CD8-positive, alpha-beta memory T cell (primary cell): ENCODE measurements at regions of chr16 and their contacts with region 1.

Region 1: DNA sequence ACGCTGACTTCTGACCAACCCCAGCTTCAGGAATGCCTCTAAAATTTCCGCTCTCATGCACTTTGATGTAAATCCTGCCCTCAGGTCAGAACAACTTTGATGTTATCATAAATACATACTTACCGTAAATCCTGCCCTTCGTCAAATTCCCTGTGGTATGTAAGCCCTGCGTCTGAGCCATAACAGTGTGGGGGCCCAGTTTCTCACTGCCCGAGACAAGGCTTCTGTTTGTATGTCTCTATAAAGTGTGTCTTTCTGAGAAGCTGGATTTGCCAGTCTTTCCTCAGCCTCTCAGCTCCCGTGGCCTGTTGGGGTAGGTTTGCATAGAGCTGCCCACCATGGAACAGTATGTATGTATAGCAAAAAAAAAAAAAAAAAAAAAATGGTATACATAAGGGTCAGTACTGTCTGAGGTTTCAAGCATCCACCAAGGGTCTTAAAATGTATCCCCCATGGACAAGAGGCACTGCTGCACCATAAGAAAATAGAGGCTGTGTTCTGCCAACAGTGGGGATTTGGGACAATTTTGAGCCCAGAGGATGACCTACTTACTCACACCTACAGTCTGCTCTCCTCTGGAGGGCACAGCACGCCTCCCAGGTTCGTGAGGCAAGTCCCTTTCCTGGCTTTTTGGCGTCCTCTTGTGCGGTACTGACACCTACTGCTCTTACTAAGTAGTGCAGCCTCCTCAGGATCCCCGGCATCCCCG is 17.5 kb downstream of the PRMT7 start:
- DNase-seq: peak; percentile 59 to 87 (median 70)
- H3K4me3 ChIP-seq: no peak overlapping the region
- H3K4me3 Mint-ChIP-seq: no peak overlapping the region
- H3K27ac ChIP-seq: no peak overlapping the region
- H3K27ac Mint-ChIP-seq: peak overlapping the region in 5 of 8 donors; percentile 7 to 83 (median 38)
- H3K4me1 ChIP-seq: peaks cover 12% of the 10 kb centered on the region
- H3K4me1 Mint-ChIP-seq: peaks cover 3 to 12% (median 5%) of the 10 kb centered on the region in 3 donors
- H3K27me3 ChIP-seq: no peaks in the 10 kb centered on the region
- H3K27me3 Mint-ChIP-seq: no peaks in the 10 kb centered on the region

Region 2: GRCh38 chr16:68237243-68238028 is 90.9 kb before region 1 on chr16:
- CTCF ChIA-PET with region 1: interaction called, 14 read pairs
- POLR2A ChIA-PET with region 1: no interaction called
- DNase-seq: peak; percentile 80 to 90 (median 82)
- H3K4me3 ChIP-seq: peak overlapping the region; percentile 78
- H3K4me3 Mint-ChIP-seq: peak overlapping the region; percentile 88 to 97 (median 96)
- H3K27ac ChIP-seq: no peak overlapping the region
- H3K27ac Mint-ChIP-seq: peak overlapping the region; percentile 84 to 94 (median 92)
- H3K4me1 ChIP-seq: peaks cover 22% of the 10 kb centered on the region
- H3K4me1 Mint-ChIP-seq: peaks cover 25 to 43% (median 27%) of the 10 kb centered on the region in 3 donors
- H3K27me3 ChIP-seq: no peaks in the 10 kb centered on the region
- H3K27me3 Mint-ChIP-seq: peaks cover 0 to 4% of the 10 kb centered on the region in 2 donors

Region 3: GRCh38 chr16:68244903-68245853 is 83.1 kb before region 1 on chr16 and contains the start of gene PLA2G15:
- CTCF ChIA-PET with region 1: interaction called, 18 read pairs
- POLR2A ChIA-PET with region 1: no interaction called
- DNase-seq: peak; percentile 93 to 97 (median 95)
- H3K4me3 ChIP-seq: peak within 1 kb of the TSS; percentile 98
- H3K4me3 Mint-ChIP-seq: peak within 1 kb of the TSS; percentile 97 to 99 (median 98)
- H3K27ac ChIP-seq: peak within 1 kb of the TSS; percentile 57
- H3K27ac Mint-ChIP-seq: peak within 1 kb of the TSS in 7 of 8 donors; percentile 72 to 90 (median 85)
- H3K4me1 ChIP-seq: peaks cover 19% of the 10 kb centered on the region
- H3K4me1 Mint-ChIP-seq: peaks cover 19 to 38% (median 21%) of the 10 kb centered on the region in 3 donors
- H3K27me3 ChIP-seq: no peaks in the 10 kb centered on the region
- H3K27me3 Mint-ChIP-seq: no peaks in the 10 kb centered on the region
- total RNA-seq, gene PLA2G15: 9.0 to 9.4 TPM

Region 4: DNA sequence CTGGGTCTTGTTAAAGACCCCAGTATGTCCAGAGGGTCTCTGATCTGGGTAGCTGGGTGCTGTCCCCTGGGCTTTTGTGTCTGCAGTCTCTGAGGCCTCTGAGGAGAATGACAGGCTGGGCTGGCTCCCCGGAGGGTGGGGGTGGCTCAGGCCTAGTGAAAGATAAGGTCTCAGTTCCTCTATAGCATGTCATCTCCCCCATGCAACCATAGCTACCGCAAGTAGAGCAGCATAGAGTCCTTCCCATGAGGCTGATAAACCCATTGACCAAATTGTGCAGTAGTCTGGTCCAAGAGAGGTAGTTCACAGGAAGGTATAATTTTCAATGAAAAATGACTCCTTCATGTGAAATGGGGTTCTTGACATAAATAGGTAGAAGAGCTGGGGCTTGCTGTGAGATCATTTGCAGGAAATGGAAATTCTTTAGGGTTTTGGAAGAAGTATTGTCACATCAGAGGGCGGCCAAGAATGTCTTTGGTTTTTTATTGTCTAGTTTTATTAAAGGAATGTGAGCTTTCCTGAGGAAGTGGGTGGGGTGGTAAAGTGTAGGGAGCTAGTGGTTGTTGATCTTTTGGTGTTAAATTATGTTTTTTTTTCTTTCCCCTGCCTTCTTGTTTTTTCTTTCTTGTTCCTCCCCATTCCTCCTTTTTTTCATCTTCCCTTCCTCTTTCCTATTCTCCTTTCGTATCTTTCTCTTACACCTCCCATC is 38.5 kb before region 1 on chr16:
- CTCF ChIA-PET with region 1: interaction called, 12 read pairs
- POLR2A ChIA-PET with region 1: no interaction called
- DNase-seq: peak in 3 of 5 donors; percentile 40 to 57 (median 48)
- H3K4me3 ChIP-seq: peak overlapping the region; percentile 19
- H3K4me3 Mint-ChIP-seq: peak overlapping the region; percentile 18 to 71 (median 56)
- H3K27ac ChIP-seq: peak overlapping the region; percentile 35
- H3K27ac Mint-ChIP-seq: peak overlapping the region; percentile 84 to 98 (median 92)
- H3K4me1 ChIP-seq: peaks cover 82% of the 10 kb centered on the region
- H3K4me1 Mint-ChIP-seq: peaks cover 83 to 89% (median 83%) of the 10 kb centered on the region in 3 donors
- H3K27me3 ChIP-seq: no peaks in the 10 kb centered on the region
- H3K27me3 Mint-ChIP-seq: no peaks in the 10 kb centered on the region

Region 5: DNA sequence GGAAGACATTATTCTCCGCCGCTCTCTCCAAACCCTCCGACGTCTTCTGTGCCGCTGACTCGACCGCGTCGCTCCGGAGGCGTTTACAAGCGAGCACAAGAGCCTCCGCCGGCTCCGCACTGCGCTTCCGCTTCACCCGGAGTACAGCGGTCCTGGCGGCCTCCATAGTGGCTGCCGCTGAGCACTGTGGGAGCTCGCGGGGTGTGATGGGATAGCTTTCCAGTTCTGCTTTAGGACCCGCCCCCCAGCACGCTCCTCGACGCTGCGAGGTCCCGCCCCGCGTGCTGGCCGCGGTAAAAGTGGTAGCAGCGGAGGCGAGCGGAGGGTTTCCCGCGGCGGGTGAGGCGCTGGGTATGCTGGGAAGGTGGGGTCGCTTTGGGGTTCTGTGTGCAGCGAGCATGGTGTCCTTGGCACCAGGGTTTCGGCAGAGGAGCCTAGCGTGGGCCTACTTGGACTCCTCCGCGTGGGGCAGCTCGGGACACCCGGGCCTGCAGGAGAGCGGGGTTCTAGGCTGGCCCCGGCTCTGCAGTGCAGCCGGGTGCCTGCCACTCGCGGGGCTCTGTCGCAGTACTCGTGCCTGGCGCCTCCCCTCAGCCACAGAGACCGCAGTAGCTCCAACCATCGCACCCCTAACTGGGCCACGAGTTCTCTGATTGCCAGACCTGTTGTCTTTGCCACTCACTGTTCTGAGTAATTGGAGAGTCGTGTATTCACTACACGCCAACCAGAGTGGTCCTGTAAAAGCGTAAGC is 17.4 kb before region 1 on chr16 and contains the starts of genes PRMT7 and SLC7A6OS:
- CTCF ChIA-PET with region 1: interaction called, 24 read pairs
- POLR2A ChIA-PET with region 1: no interaction called
- DNase-seq: peak; percentile 90 to 94 (median 92)
- H3K4me3 ChIP-seq: peak within 1 kb of the TSS; percentile 95
- H3K4me3 Mint-ChIP-seq: peak within 1 kb of the TSS; percentile 90 to 99 (median 98)
- H3K27ac ChIP-seq: peak within 1 kb of the TSS; percentile 83
- H3K27ac Mint-ChIP-seq: peak within 1 kb of the TSS; percentile 92 to 98 (median 98)
- H3K4me1 ChIP-seq: peaks cover 43% of the 10 kb centered on the region
- H3K4me1 Mint-ChIP-seq: peaks cover 44 to 63% (median 53%) of the 10 kb centered on the region in 3 donors
- H3K27me3 ChIP-seq: no peaks in the 10 kb centered on the region
- H3K27me3 Mint-ChIP-seq: no peaks in the 10 kb centered on the region
- total RNA-seq, gene PRMT7: 61.1 to 67.5 TPM
- total RNA-seq, gene SLC7A6OS: 21.8 to 25.5 TPM

Region 6: GRCh38 chr16:68377670-68378393 is 49.5 kb after region 1 on chr16:
- CTCF ChIA-PET with region 1: no interaction called
- POLR2A ChIA-PET with region 1: no interaction called
- DNase-seq: peak in 1 of 5 donors; percentile 16
- H3K4me3 ChIP-seq: no peak overlapping the region
- H3K4me3 Mint-ChIP-seq: no peak overlapping the region
- H3K27ac ChIP-seq: no peak overlapping the region
- H3K27ac Mint-ChIP-seq: no peak overlapping the region
- H3K4me1 ChIP-seq: peaks cover 21% of the 10 kb centered on the region
- H3K4me1 Mint-ChIP-seq: peaks cover 5 to 16% (median 13%) of the 10 kb centered on the region in 3 donors
- H3K27me3 ChIP-seq: no peaks in the 10 kb centered on the region
- H3K27me3 Mint-ChIP-seq: no peaks in the 10 kb centered on the region